GM12878 (cell line): ENCODE measurements at regions of chr17 and their contacts with region 1.

Region 1: DNA sequence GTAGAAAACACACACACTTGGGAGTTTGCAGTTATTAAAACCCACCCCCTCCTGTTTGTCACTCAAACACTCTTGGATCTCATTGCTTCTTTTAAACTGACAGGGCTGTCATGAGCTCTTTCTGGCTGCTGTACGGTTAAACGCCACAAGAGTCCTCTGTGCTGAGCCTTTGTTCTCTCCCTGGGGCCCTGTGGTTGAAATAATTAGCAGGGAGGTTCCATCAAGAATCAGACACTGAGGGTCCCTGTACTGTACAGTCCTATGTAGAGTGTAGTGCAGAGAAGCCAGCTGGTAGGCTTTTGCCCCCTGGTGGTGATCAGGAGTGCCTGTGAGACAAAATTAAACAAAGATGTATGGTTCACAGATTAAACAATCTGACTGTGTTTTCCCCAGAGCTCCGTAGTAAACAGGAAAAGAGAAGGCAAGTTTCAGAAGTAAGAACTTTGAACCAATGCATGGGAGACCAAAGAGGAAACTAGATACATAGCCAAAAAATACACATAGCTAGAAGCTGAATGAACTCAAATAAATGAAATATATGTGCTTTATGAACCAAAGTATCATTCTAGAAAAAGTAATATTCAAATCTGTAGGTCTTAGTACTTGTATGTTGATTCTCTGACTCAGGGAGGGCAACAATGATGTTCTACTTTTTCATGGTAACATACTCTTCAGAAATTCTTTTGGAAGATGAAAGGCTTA is 1.4 kb upstream of the SSH2 start:
- DNase-seq: peak; percentile 90
- ATAC-seq: peak; percentile 86
- H3K4me3 ChIP-seq: peak overlapping the region; percentile 96; the same call in 1 of the 2 replicates
- H3K27ac ChIP-seq: no peak overlapping the region
- H3K4me1 ChIP-seq: peaks cover 4% of the 10 kb centered on the region
- H3K27me3 ChIP-seq: no peaks in the 10 kb centered on the region
- CTCF ChIP-seq: peak; percentile 83 to 95 (median 94); a peak in 5 of 6 replicates
- EP300 ChIP-seq: peak; percentile 19 to 43; a peak in 2 of 4 replicates
- POLR2A ChIP-seq: no peak
- RAD21 ChIP-seq: peak; percentile 93

Region 2: DNA sequence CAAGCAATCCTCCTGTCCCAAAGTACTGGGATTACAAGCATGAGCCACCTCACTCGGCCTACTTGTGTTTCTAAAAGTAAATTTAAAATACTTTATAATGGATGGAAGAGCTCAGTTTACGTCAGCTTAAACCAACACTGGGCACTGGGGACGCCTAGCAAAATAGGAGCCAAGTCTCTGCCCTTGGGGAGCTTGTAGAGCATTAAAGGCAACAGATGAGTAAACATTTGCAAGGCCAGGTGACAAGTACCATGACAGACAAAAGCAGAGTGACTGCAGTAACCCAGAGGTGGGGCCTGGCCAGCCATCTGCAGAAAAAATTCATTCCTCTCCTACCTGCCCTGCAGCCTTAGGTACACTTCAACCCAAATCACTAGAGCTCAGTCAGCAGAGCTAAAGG is 1901.0 kb before region 1 on chr17:
- CTCF ChIA-PET with region 1: no interaction called
- POLR2A ChIA-PET with region 1: no interaction called
- RAD21 ChIA-PET with region 1: no interaction called
- SMC1A ChIA-PET with region 1: no interaction called
- in situ Hi-C with region 1: no loop called
- intact Hi-C with region 1: no loop called
- DNase-seq: no peak
- ATAC-seq: no peak
- H3K4me3 ChIP-seq: no peak overlapping the region
- H3K27ac ChIP-seq: no peak overlapping the region
- H3K4me1 ChIP-seq: no peaks in the 10 kb centered on the region
- H3K27me3 ChIP-seq: no peaks in the 10 kb centered on the region
- CTCF ChIP-seq: no peak
- EP300 ChIP-seq: no peak
- POLR2A ChIP-seq: no peak
- RAD21 ChIP-seq: no peak

Region 3: GRCh38 chr17:29617125-29617480 is 314.3 kb before region 1 on chr17:
- CTCF ChIA-PET with region 1: interaction called, 38 read pairs
- POLR2A ChIA-PET with region 1: interaction called, 10 read pairs
- RAD21 ChIA-PET with region 1: interaction called, 30 read pairs
- SMC1A ChIA-PET with region 1: interaction called, 22 read pairs
- in situ Hi-C with region 1: no loop called
- intact Hi-C with region 1: loop called (anchors 10 kb)
- DNase-seq: no peak
- ATAC-seq: peak; percentile 82
- H3K4me3 ChIP-seq: peak overlapping the region; percentile 67; the same call in 1 of the 2 replicates
- H3K27ac ChIP-seq: no peak overlapping the region; the same call in 1 of the 2 replicates
- H3K4me1 ChIP-seq: peaks cover 38% of the 10 kb centered on the region
- H3K27me3 ChIP-seq: peaks cover 4 to 6% of the 10 kb centered on the region in 2 experiments; a peak in 3 of 4 replicates
- CTCF ChIP-seq: peak; percentile 76 to 94 (median 93)
- EP300 ChIP-seq: no peak
- POLR2A ChIP-seq: peak; percentile 70
- RAD21 ChIP-seq: peak; percentile 47

Region 4: DNA sequence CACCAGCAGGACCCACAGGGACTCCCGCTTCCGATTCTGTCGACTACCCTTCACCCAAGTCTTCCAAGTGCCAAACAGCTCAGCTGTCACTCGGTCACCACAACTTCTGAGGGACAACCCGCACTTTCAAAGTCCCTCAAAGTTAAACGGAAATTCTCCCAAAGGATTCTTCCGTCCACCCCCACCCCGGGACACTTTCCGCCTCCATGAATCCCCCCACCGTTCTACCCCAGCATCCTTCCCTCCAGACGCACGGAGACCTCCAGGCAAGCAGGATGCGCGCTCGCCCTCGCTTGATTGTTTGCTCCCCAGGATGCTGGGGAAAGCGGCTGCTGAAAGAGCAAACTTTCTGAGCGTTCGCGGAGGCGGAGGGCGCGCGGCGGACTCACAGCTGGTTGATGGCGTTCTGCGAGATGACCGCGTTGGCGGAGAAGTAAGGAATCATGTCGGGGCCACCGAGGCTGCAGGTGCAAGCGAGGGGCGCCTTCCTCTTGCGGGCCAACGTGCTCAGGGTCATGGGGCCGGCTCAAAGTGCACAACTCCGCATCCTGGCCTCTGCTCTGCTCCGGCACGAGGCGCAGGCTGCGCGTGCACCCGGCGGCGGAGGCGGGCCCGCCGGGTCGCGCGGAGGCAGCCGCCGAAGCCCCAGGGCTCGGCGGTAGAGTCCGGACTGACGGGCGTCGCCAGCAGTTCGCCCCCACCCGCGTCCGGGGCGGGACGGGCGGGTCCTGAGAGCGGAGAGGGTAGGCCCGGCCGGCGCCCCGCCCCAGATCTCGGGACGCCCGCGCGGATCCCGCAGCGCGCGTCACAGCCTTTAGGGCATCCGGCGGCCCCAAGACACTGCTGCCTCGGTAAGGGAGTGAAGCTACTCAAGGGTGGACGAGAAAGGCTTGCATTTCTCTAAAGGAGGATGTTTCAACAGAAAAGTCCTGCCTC is 170.4 kb before region 1 on chr17:
- CTCF ChIA-PET with region 1: interaction called, 18 read pairs
- POLR2A ChIA-PET with region 1: interaction called, 7 read pairs
- RAD21 ChIA-PET with region 1: interaction called, 15 read pairs
- SMC1A ChIA-PET with region 1: interaction called, 10 read pairs
- in situ Hi-C with region 1: no loop called
- intact Hi-C with region 1: no loop called
- DNase-seq: peak; percentile 55
- ATAC-seq: peak; percentile 92
- H3K4me3 ChIP-seq: peak overlapping the region; percentile 88
- H3K27ac ChIP-seq: peak overlapping the region; percentile 90
- H3K4me1 ChIP-seq: peaks cover 11% of the 10 kb centered on the region; the same call in 1 of the 2 replicates
- H3K27me3 ChIP-seq: no peaks in the 10 kb centered on the region
- CTCF ChIP-seq: no peak
- EP300 ChIP-seq: 0 out of 4 replicates have a peak, but pooled peaks of 1 of the 2 experiments have one; percentile 4
- POLR2A ChIP-seq: peak; percentile 91
- RAD21 ChIP-seq: no peak

Region 5: DNA sequence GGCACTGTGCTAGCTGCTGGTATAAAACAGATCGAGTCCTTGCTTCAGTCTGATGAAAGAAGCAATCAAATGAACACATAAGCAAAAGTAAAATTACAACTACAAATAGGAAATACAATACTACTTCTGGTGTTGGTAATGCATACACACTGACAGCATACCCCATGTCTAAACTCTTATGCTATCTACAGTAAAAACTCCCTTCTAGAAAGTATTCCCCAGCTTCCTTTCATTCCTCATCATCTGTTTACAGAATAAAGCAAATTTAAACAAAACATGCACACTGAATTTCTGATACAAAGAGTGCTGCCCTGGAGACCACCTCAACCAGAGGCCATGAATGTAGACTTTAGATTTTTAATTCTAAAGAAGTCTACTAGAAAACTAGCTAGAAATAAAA is 111.0 kb before region 1 on chr17:
- CTCF ChIA-PET with region 1: interaction called, 18 read pairs
- POLR2A ChIA-PET with region 1: no interaction called
- RAD21 ChIA-PET with region 1: interaction called, 16 read pairs
- SMC1A ChIA-PET with region 1: interaction called, 20 read pairs
- in situ Hi-C with region 1: no loop called
- intact Hi-C with region 1: no loop called
- DNase-seq: no peak
- ATAC-seq: no peak
- H3K4me3 ChIP-seq: no peak overlapping the region
- H3K27ac ChIP-seq: no peak overlapping the region
- H3K4me1 ChIP-seq: no peaks in the 10 kb centered on the region
- H3K27me3 ChIP-seq: no peaks in the 10 kb centered on the region
- CTCF ChIP-seq: no peak
- EP300 ChIP-seq: no peak
- POLR2A ChIP-seq: no peak
- RAD21 ChIP-seq: no peak

Region 6: DNA sequence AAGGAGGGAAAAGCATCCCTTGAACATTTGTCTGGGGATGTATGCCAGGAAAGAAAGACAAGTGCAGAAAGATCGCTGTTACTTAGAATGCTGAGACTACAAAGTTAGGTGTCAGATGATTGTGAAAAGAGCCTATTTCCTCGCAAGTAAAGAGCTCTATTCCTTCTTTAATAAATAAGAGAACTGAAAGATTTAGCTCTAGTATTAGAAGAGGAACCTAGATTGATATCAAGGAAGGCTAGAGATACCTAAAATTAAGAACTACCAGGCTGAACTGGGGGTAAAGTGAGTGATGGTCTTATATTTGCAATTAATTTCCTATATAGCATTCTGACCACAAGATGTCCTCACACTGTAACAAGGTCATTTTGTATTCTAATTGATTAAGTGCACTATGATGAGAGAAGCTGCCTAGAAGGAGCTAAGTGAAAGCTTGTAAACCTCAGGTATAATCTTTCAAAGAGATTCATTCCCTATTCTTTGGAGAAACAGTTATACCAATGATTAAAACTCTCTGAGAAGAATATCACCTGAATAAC is 63.7 kb before region 1 on chr17:
- CTCF ChIA-PET with region 1: interaction called, 99 read pairs
- POLR2A ChIA-PET with region 1: interaction called, 17 read pairs
- RAD21 ChIA-PET with region 1: interaction called, 54 read pairs
- SMC1A ChIA-PET with region 1: interaction called, 64 read pairs
- in situ Hi-C with region 1: no loop called
- intact Hi-C with region 1: loop called (anchors 1 kb)
- DNase-seq: no peak
- ATAC-seq: peak; percentile 58
- H3K4me3 ChIP-seq: no peak overlapping the region
- H3K27ac ChIP-seq: no peak overlapping the region
- H3K4me1 ChIP-seq: peaks cover 7% of the 10 kb centered on the region
- H3K27me3 ChIP-seq: no peaks in the 10 kb centered on the region
- CTCF ChIP-seq: peak in 1 of 3 experiments; percentile 32; a peak in 3 of 6 replicates
- EP300 ChIP-seq: no peak
- POLR2A ChIP-seq: no peak
- RAD21 ChIP-seq: peak; percentile 39; the same call in 1 of the 2 replicates

Region 7: GRCh38 chr17:30021708-30022317 is 90.4 kb after region 1 on chr17:
- CTCF ChIA-PET with region 1: interaction called, 31 read pairs
- POLR2A ChIA-PET with region 1: interaction called, 5 read pairs
- RAD21 ChIA-PET with region 1: interaction called, 10 read pairs
- SMC1A ChIA-PET with region 1: interaction called, 27 read pairs
- in situ Hi-C with region 1: no loop called
- intact Hi-C with region 1: loop called (anchors 5 kb)
- DNase-seq: no peak
- ATAC-seq: peak; percentile 77
- H3K4me3 ChIP-seq: no peak overlapping the region
- H3K27ac ChIP-seq: no peak overlapping the region
- H3K4me1 ChIP-seq: no peaks in the 10 kb centered on the region
- H3K27me3 ChIP-seq: no peaks in the 10 kb centered on the region
- CTCF ChIP-seq: peak; percentile 71 to 75 (median 75)
- EP300 ChIP-seq: no peak
- POLR2A ChIP-seq: no peak
- RAD21 ChIP-seq: peak; percentile 82

Region 8: DNA sequence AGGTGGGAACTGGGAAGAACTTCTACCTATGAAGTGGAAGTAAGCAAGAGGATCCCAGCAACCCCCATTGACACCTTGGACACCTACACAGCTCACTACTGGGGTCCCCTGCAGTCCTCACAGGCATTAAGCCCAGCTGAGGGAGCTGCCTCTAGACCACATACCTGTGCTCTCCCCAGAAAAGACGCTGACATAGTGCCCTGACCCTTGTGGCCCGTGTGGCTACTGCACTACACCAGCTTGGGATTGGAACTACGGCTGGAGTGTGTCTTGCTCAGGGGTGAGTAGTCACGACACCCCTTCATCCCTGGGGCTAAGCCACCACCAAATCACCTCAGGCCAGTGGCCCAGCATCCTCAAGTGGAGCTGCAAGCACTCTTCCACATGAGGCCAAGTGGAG is 131.0 kb after region 1 on chr17:
- CTCF ChIA-PET with region 1: no interaction called
- POLR2A ChIA-PET with region 1: no interaction called
- RAD21 ChIA-PET with region 1: no interaction called
- SMC1A ChIA-PET with region 1: no interaction called
- in situ Hi-C with region 1: no loop called
- intact Hi-C with region 1: no loop called
- DNase-seq: no peak
- ATAC-seq: no peak
- H3K4me3 ChIP-seq: no peak overlapping the region
- H3K27ac ChIP-seq: no peak overlapping the region
- H3K4me1 ChIP-seq: no peaks in the 10 kb centered on the region
- H3K27me3 ChIP-seq: no peaks in the 10 kb centered on the region; a peak in 1 of 4 replicates
- CTCF ChIP-seq: no peak
- EP300 ChIP-seq: no peak
- POLR2A ChIP-seq: no peak
- RAD21 ChIP-seq: no peak

Region 9: DNA sequence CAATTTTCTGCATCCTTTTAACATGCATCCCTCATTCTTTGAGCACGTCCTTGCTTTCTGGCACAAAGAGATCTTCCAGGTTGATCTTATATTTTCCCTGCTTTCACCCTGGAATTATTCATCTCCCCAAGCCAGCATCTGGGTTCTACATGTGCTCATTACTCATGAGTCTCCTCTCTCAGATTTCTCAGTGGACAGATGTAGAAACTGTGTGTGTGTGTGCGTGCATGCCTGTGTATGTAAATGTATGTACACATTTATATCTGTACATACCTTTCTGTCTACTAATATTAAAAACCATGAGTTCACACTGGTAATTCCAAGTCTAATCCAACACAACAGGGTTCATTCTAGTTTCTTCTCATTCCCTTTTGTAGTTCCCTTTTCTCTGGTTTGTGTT is 143.3 kb after region 1 on chr17:
- CTCF ChIA-PET with region 1: no interaction called
- POLR2A ChIA-PET with region 1: no interaction called
- RAD21 ChIA-PET with region 1: no interaction called
- SMC1A ChIA-PET with region 1: no interaction called
- in situ Hi-C with region 1: no loop called
- intact Hi-C with region 1: no loop called
- DNase-seq: no peak
- ATAC-seq: no peak
- H3K4me3 ChIP-seq: no peak overlapping the region
- H3K27ac ChIP-seq: no peak overlapping the region
- H3K4me1 ChIP-seq: no peaks in the 10 kb centered on the region
- H3K27me3 ChIP-seq: peaks cover 0 to 5% of the 10 kb centered on the region in 2 experiments; a peak in 1 of 4 replicates
- CTCF ChIP-seq: no peak
- EP300 ChIP-seq: no peak
- POLR2A ChIP-seq: no peak
- RAD21 ChIP-seq: no peak